ENCODE measurements at regions of chr6 and their contacts with region 1.

Region 1: GRCh38 chr6:26532699-26533531 is 5.3 kb upstream of the HMGN4 start:
- DNase-seq: peak; percentile 92 to 96 (median 95)
- H3K4me3 ChIP-seq: peak overlapping the region; percentile 58 to 98 (median 87)
- H3K27ac ChIP-seq: peak overlapping the region; percentile 50 to 83
- H3K4me1 ChIP-seq: peaks cover 12 to 28% (median 22%) of the 10 kb centered on the region in 4 experiments
- H3K27me3 ChIP-seq: no peaks in the 10 kb centered on the region

Region 2: DNA sequence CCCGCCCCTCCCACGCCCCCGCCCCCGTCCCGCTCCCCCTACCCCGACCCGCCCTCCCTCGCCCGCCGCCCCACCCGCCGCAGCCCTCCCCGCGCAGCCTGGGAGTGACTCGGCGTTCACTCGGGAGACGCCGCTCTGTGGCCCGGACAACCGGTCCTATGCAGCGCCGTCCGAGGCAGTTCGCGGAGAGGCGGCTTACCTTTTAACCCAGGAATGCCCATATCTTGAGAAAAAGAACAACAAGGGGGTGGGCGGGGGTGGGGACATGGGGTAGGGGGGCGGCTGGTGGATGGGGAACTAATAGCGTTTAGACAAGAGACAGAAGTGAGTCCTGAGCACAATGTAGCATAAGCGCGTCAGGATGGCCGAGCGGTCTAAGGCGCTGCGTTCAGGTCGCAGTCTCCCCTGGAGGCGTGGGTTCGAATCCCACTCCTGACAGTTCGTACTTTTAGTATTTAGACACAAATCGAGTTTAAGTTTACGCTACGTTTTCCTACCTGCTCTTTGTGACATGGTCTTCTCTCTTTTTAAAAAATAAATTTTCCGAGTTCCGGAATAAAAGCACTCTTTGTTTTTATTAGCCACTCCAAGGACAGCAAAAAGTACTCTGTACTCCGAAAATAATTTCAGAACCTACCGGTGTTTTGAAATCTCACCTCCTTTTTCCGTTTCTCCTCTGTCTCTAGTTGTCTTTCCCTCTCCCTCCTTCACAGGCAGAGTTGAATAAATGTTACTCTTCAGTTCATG is 11.9 kb before region 1 on chr6:
- CTCF ChIA-PET with region 1: interaction called, 14 read pairs
- POLR2A ChIA-PET with region 1: interaction called, 5 read pairs
- DNase-seq: peak; percentile 90 to 95 (median 94)
- H3K4me3 ChIP-seq: peak overlapping the region in 6 of 7 experiments; percentile 65 to 98 (median 80)
- H3K27ac ChIP-seq: peak overlapping the region in 1 of 2 experiments; percentile 82
- H3K4me1 ChIP-seq: peaks cover 8 to 34% (median 23%) of the 10 kb centered on the region in 4 experiments
- H3K27me3 ChIP-seq: no peaks in the 10 kb centered on the region

Measured in common myeloid progenitor, CD34-positive (primary cell).